Thyroid gland (tissue), 4 donors: ENCODE measurements at regions of chr2 and their contacts with region 1.

Region 1: GRCh38 chr2:38734299-38735058 is 16.7 kb downstream of the SRSF7 start:
- DNase-seq: peak; percentile 47 to 48
- H3K4me3 ChIP-seq: no peak overlapping the region
- H3K27ac ChIP-seq: peak overlapping the region in 2 of 3 donors; percentile 21 to 22
- H3K4me1 ChIP-seq: peaks cover 0 to 16% of the 10 kb centered on the region in 2 donors
- H3K27me3 ChIP-seq: no peaks in the 10 kb centered on the region
- CTCF ChIP-seq: peak in 1 of 6 experiments; percentile 25
- POLR2A ChIP-seq: no peak

Region 2: DNA sequence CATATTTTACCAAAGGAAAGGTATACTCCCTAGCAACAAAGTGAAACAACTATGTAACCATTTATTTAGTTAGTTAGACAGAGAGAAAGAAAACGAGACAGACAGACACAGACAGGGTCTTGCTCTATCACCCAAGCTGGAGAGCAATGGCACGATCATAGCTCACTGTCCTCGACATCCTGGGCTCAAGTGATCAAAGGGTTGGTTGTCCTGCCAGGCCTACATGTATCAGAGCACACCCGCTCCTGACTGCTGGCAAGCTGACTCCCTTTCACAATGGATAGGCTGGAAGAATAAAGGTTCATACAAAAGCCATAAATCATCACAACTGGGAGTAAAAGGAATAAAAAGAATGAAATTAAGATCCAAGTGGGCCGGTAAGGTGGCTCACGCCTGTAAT is 410.9 kb before region 1 on chr2:
- intact Hi-C with region 1: loop called (anchors 10 kb)
- DNase-seq: peak; percentile 43 to 46
- H3K4me3 ChIP-seq: no peak overlapping the region
- H3K27ac ChIP-seq: peak overlapping the region; percentile 11 to 64 (median 64)
- H3K4me1 ChIP-seq: peaks cover 48 to 59% of the 10 kb centered on the region in 2 donors
- H3K27me3 ChIP-seq: no peaks in the 10 kb centered on the region
- CTCF ChIP-seq: no peak
- POLR2A ChIP-seq: no peak

Region 3: DNA sequence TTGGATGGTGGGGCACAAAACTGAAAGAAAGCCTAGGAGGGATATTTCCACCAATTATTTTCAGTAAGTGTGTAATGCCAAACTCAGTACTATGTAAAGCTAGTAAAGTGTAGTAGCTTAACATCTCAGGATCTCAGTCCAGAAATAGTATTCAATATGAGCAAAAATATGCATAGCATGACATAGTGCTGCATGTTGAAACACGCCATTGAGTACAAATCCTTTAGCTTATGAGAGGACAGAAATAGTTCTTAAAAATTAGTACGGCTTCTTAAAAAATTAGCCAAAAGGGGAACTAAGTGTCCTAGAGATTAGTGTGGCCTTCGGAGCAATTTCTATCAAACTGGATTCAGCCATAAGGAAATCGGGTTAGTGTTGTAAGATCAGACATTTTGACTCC is 335.7 kb before region 1 on chr2:
- intact Hi-C with region 1: no loop called
- DNase-seq: no peak
- H3K4me3 ChIP-seq: no peak overlapping the region
- H3K27ac ChIP-seq: no peak overlapping the region
- H3K4me1 ChIP-seq: no peaks in the 10 kb centered on the region
- H3K27me3 ChIP-seq: no peaks in the 10 kb centered on the region
- CTCF ChIP-seq: no peak
- POLR2A ChIP-seq: no peak